B cell (primary cell): ENCODE measurements at regions of chr4 and their contacts with region 1.

Region 1: DNA sequence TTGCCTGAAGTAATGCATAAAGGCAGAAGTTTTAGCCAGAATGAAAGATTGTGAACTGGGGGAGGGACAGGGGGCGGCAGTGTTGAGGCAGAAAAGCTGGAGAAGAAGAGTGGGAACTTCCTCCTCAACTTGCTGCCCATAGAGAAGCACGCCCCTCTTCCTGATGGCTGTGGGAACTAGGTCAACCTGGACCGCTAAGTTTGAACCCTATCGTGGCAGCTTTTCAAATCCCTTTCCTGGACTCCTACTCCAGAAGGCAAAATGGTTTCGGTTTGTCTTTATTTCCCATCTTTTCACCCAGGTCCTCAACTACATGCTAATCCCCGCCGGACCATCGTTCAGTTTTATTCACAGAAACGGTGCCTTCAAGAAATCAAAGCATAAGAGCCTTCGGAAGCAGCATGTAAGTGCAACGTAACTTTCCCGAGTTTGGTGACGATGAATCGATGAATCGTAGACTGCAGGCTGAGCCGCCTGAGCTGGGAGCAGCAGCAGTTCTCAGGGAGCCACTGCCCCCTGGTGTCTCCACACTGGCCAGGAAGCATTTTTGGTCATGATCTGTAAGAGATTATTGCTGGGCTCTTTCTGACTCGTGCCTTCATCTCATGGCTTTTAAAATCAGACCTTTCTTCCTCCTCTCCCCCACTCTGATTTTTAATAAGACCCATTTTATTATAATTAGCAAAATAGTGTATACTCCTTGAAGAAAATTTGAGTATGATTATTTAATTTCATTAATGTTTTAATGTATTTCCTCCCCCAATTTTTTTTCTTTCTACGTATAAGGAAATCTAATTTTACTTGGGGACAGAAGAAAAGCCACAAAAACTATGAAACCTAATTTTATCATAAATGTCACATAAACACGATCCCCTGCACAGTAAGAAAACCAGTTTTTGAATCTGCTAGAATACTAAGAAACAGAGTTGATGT is 21.4 kb downstream of the SPINK2 start:
- DNase-seq: peak; percentile 88
- ATAC-seq: peak; percentile 97
- H3K4me3 ChIP-seq: peak overlapping the region; percentile 53 to 98 (median 91)
- H3K4me3 Mint-ChIP-seq: peak overlapping the region; percentile 96
- H3K27ac ChIP-seq: peak overlapping the region; percentile 47 to 78
- H3K27ac Mint-ChIP-seq: peak overlapping the region; percentile 89
- H3K4me1 ChIP-seq: peaks cover 16 to 23% of the 10 kb centered on the region in 2 donors
- H3K4me1 Mint-ChIP-seq: peaks cover 29% of the 10 kb centered on the region
- H3K27me3 ChIP-seq: no peaks in the 10 kb centered on the region
- H3K27me3 Mint-ChIP-seq: no peaks in the 10 kb centered on the region
- CTCF ChIP-seq: peak; percentile 87

Region 2: GRCh38 chr4:56215901-56216300 is 584.2 kb before region 1 on chr4:
- CTCF ChIA-PET with region 1: no interaction called
- POLR2A ChIA-PET with region 1: no interaction called
- intact Hi-C with region 1: no loop called
- DNase-seq: no peak
- ATAC-seq: no peak
- H3K4me3 ChIP-seq: no peak overlapping the region
- H3K4me3 Mint-ChIP-seq: no peak overlapping the region
- H3K27ac ChIP-seq: no peak overlapping the region
- H3K27ac Mint-ChIP-seq: no peak overlapping the region
- H3K4me1 ChIP-seq: no peaks in the 10 kb centered on the region
- H3K4me1 Mint-ChIP-seq: no peaks in the 10 kb centered on the region
- H3K27me3 ChIP-seq: no peaks in the 10 kb centered on the region
- H3K27me3 Mint-ChIP-seq: peaks cover 9% of the 10 kb centered on the region
- CTCF ChIP-seq: no peak

Region 3: GRCh38 chr4:56435306-56435926 is 364.7 kb before region 1 on chr4 and contains the start of gene PPAT:
- CTCF ChIA-PET with region 1: interaction called, 12 read pairs
- POLR2A ChIA-PET with region 1: interaction called, 3 read pairs
- intact Hi-C with region 1: no loop called
- DNase-seq: peak; percentile 99
- ATAC-seq: peak; percentile 84
- H3K4me3 ChIP-seq: peak within 1 kb of the TSS; percentile 82 to 97 (median 92)
- H3K4me3 Mint-ChIP-seq: peak within 1 kb of the TSS; percentile 96
- H3K27ac ChIP-seq: peak within 1 kb of the TSS; percentile 77 to 83
- H3K27ac Mint-ChIP-seq: peak within 1 kb of the TSS; percentile 99
- H3K4me1 ChIP-seq: peaks cover 16 to 22% of the 10 kb centered on the region in 2 donors
- H3K4me1 Mint-ChIP-seq: peaks cover 29% of the 10 kb centered on the region
- H3K27me3 ChIP-seq: no peaks in the 10 kb centered on the region
- H3K27me3 Mint-ChIP-seq: no peaks in the 10 kb centered on the region
- CTCF ChIP-seq: peak; percentile 19
- total RNA-seq, gene PPAT: 6.7 and 9.2 TPM in 2 replicates

Region 4: GRCh38 chr4:56544573-56545131 is 255.4 kb before region 1 on chr4:
- CTCF ChIA-PET with region 1: interaction called, 15 read pairs
- POLR2A ChIA-PET with region 1: interaction called, 4 read pairs
- intact Hi-C with region 1: loop called (anchors 1 kb)
- DNase-seq: peak; percentile 88
- ATAC-seq: peak; percentile 100
- H3K4me3 ChIP-seq: peak overlapping the region in 4 of 5 experiments; percentile 17 to 45 (median 38)
- H3K4me3 Mint-ChIP-seq: peak overlapping the region; percentile 77
- H3K27ac ChIP-seq: no peak overlapping the region
- H3K27ac Mint-ChIP-seq: peak overlapping the region; percentile 53
- H3K4me1 ChIP-seq: peaks cover 7% of the 10 kb centered on the region in 2 donors
- H3K4me1 Mint-ChIP-seq: peaks cover 12% of the 10 kb centered on the region
- H3K27me3 ChIP-seq: peaks cover 0 to 5% (median 3%) of the 10 kb centered on the region in 4 experiments
- H3K27me3 Mint-ChIP-seq: peaks cover 13% of the 10 kb centered on the region
- CTCF ChIP-seq: peak; percentile 99

Region 5: GRCh38 chr4:56655209-56655626 is 144.9 kb before region 1 on chr4:
- CTCF ChIA-PET with region 1: interaction called, 3 read pairs
- POLR2A ChIA-PET with region 1: no interaction called
- intact Hi-C with region 1: loop called (anchors 5 kb)
- DNase-seq: peak; percentile 61
- ATAC-seq: peak; percentile 29
- H3K4me3 ChIP-seq: peak overlapping the region in 4 of 5 experiments; percentile 59 to 72 (median 68)
- H3K4me3 Mint-ChIP-seq: peak overlapping the region; percentile 96
- H3K27ac ChIP-seq: no peak overlapping the region
- H3K27ac Mint-ChIP-seq: peak overlapping the region; percentile 73
- H3K4me1 ChIP-seq: peaks cover 45 to 52% of the 10 kb centered on the region in 2 donors
- H3K4me1 Mint-ChIP-seq: peaks cover 63% of the 10 kb centered on the region
- H3K27me3 ChIP-seq: peaks cover 0 to 20% (median 2%) of the 10 kb centered on the region in 4 experiments
- H3K27me3 Mint-ChIP-seq: peaks cover 7% of the 10 kb centered on the region
- CTCF ChIP-seq: no peak

Region 6: GRCh38 chr4:56786955-56787354 is 13.1 kb before region 1 on chr4:
- CTCF ChIA-PET with region 1: interaction called, 11 read pairs
- POLR2A ChIA-PET with region 1: no interaction called
- intact Hi-C with region 1: no loop called
- DNase-seq: no peak
- ATAC-seq: no peak
- H3K4me3 ChIP-seq: no peak overlapping the region
- H3K4me3 Mint-ChIP-seq: no peak overlapping the region
- H3K27ac ChIP-seq: no peak overlapping the region
- H3K27ac Mint-ChIP-seq: no peak overlapping the region
- H3K4me1 ChIP-seq: peaks cover 6 to 9% of the 10 kb centered on the region in 2 donors
- H3K4me1 Mint-ChIP-seq: peaks cover 13% of the 10 kb centered on the region
- H3K27me3 ChIP-seq: no peaks in the 10 kb centered on the region
- H3K27me3 Mint-ChIP-seq: no peaks in the 10 kb centered on the region
- CTCF ChIP-seq: no peak

Region 7: DNA sequence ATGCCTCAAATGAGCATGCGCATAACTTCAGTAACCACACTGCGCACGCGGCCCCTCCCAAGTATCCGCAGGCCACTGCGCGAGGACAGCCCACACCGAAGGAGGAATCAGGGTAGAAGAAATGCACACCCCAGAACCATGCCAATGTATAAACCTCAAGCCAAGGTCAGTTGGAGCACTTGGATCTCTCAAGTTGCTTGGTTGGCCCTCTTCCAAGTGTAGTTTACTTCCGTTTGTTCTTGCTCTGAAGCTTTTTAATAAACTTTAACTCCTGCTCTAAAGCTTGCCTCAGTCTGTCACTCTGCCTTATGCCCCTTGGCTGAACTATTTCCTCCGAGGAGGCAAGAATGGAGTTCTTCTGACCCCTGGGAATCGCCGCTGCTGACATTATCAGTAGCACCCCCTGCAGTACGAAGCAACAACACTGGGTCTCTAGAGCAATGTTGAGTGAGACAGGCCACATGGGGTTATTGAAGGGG is 43.4 kb after region 1 on chr4:
- CTCF ChIA-PET with region 1: interaction called, 41 read pairs
- POLR2A ChIA-PET with region 1: no interaction called
- intact Hi-C with region 1: no loop called
- DNase-seq: no peak
- ATAC-seq: no peak
- H3K4me3 ChIP-seq: no peak overlapping the region
- H3K4me3 Mint-ChIP-seq: no peak overlapping the region
- H3K27ac ChIP-seq: no peak overlapping the region
- H3K27ac Mint-ChIP-seq: no peak overlapping the region
- H3K4me1 ChIP-seq: no peaks in the 10 kb centered on the region
- H3K4me1 Mint-ChIP-seq: no peaks in the 10 kb centered on the region
- H3K27me3 ChIP-seq: no peaks in the 10 kb centered on the region
- H3K27me3 Mint-ChIP-seq: peaks cover 3% of the 10 kb centered on the region
- CTCF ChIP-seq: no peak